ENCODE measurements at regions of chr18 and their contacts with region 1.

Region 1: GRCh38 chr18:70072678-70073077 is 125.0 kb upstream of the CD226 start:
- DNase-seq: no peak
- H3K4me3 Mint-ChIP-seq: no peak overlapping the region
- H3K27ac Mint-ChIP-seq: no peak overlapping the region
- H3K4me1 Mint-ChIP-seq: peaks cover 4% of the 10 kb centered on the region
- H3K27me3 Mint-ChIP-seq: no peaks in the 10 kb centered on the region

Region 2: GRCh38 chr18:69636529-69637301 is 436.0 kb before region 1 on chr18:
- intact Hi-C with region 1: loop called (anchors 5 kb)
- DNase-seq: peak; percentile 71
- H3K4me3 Mint-ChIP-seq: no peak overlapping the region
- H3K27ac Mint-ChIP-seq: no peak overlapping the region
- H3K4me1 Mint-ChIP-seq: no peaks in the 10 kb centered on the region
- H3K27me3 Mint-ChIP-seq: peaks cover 6% of the 10 kb centered on the region

Region 3: GRCh38 chr18:69845593-69846506 is 226.8 kb before region 1 on chr18:
- intact Hi-C with region 1: loop called (anchors 5 kb)
- DNase-seq: no peak
- H3K4me3 Mint-ChIP-seq: no peak overlapping the region
- H3K27ac Mint-ChIP-seq: no peak overlapping the region
- H3K4me1 Mint-ChIP-seq: no peaks in the 10 kb centered on the region
- H3K27me3 Mint-ChIP-seq: no peaks in the 10 kb centered on the region

Region 4: DNA sequence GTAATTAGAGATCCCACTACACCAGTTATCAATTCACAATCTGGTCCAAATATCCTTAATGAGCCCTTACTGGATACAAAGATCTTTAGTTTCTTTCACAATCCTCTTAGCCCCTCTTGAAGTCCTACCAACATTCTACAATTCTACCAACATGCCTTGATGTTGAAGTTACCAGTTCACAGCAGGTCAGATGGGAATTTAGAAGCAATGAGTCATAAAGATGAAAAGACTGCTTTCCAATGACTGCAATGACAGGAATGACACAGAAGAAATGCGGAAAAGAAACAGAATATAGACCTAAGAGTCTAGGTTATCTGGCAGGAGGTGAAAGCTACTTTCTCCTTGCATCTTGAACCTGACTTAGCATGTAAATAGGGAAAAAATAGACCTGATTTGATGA is 108.3 kb after region 1 on chr18:
- intact Hi-C with region 1: no loop called
- DNase-seq: no peak
- H3K4me3 Mint-ChIP-seq: no peak overlapping the region
- H3K27ac Mint-ChIP-seq: no peak overlapping the region
- H3K4me1 Mint-ChIP-seq: peaks cover 7% of the 10 kb centered on the region
- H3K27me3 Mint-ChIP-seq: no peaks in the 10 kb centered on the region

Region 5: DNA sequence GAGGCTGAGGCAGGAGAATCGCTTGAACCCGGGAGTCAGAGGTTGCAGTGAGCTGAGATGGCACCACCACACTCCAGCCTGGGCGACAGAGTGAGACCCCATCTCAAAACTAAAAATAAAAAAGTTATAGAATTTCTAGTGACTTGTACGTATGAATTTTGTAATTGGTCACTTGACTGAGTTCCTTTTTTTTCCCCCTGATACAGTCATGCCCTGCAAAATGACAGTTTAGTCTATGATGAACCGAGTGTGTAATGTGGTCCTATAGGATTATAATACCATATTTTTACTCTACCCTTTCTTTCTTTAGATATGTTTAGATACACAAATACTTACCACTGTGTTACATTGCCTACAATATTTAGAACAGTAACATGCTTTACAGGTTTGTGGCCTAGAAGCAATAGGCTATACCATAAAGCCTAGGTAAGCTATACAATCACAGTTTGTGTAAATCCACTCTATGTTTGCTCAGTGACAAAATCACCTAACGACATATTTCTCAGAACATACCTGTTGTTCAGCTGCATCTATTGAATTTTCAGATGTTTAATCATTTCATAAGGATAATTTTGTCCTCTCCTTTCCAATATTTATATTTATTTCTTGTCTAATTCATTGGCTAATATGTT is 241.6 kb after region 1 on chr18:
- intact Hi-C with region 1: no loop called
- DNase-seq: no peak
- H3K4me3 Mint-ChIP-seq: no peak overlapping the region
- H3K27ac Mint-ChIP-seq: no peak overlapping the region
- H3K4me1 Mint-ChIP-seq: no peaks in the 10 kb centered on the region
- H3K27me3 Mint-ChIP-seq: peaks cover 2% of the 10 kb centered on the region

Measured in activated CD4-positive, alpha-beta T cell treated with anti-CD3 and anti-CD28 coated beads, Interleukin-2, amount 10 ng/mL, durations not matched to agents 24 days and 14 days (primary cell).